Activated T-helper 2 cell treated with anti-CD3 and anti-CD28 coated beads, Interferon-gamma antibody, Interleukin-2, Interleukin-4, amounts not matched to agents 10 μg/mL and 5 μg/mL and 100 μg/mL, durations not matched to agents 14 hours and 24 hours and 36 hours (primary cell): ENCODE measurements at regions of chr4 and their contacts with region 1.

Region 1: DNA sequence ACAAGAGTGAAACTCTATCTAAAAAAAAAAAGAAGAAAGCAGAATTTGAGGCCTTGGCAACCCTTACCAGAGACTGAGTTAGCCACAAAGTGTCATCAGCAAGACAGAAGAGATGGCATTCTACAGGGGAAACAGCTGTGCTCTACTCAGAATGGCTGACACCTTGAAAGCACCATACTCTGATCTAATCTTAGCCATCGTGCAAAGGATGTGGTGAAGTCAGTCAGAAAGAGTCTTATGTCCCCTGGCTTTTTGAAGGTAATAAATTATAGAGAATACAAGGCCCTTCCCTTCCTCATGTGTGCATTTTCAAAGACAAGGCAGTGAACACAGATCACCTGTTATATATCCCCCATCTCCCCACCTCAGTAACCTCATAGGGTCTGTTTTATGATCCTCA is 13.2 kb downstream of the CLNK start:
- DNase-seq: peak; percentile 59
- H3K4me3 Mint-ChIP-seq: peak overlapping the region; percentile 1
- H3K27ac Mint-ChIP-seq: peak overlapping the region; percentile 77
- H3K4me1 Mint-ChIP-seq: peaks cover 47% of the 10 kb centered on the region
- H3K27me3 Mint-ChIP-seq: no peaks in the 10 kb centered on the region

Region 2: GRCh38 chr4:10517671-10518070 is 153.7 kb before region 1 on chr4:
- intact Hi-C with region 1: no loop called
- DNase-seq: no peak
- H3K4me3 Mint-ChIP-seq: no peak overlapping the region
- H3K27ac Mint-ChIP-seq: no peak overlapping the region
- H3K4me1 Mint-ChIP-seq: no peaks in the 10 kb centered on the region
- H3K27me3 Mint-ChIP-seq: no peaks in the 10 kb centered on the region

Region 3: DNA sequence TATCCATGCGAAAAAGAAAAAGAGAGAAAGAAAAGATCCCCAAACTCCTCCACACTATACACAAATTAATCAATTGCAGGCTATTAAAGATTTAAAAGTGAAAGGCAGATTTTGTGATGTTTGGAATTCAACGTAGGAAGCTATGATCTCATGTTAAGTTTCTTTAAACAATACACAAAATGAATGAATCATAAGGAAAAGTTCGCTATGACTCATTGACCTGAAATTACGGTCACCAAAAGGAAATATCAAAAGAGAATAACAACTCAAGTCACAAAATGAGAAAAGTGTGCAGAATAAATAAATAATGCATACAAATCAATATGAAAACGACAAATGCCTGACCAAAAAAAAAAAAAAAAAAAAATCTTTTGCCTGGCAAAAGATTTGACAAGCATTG is 15.4 kb before region 1 on chr4:
- intact Hi-C with region 1: loop called (anchors 1 kb)
- DNase-seq: no peak
- H3K4me3 Mint-ChIP-seq: peak overlapping the region; percentile 55
- H3K27ac Mint-ChIP-seq: peak overlapping the region; percentile 90
- H3K4me1 Mint-ChIP-seq: peaks cover 42% of the 10 kb centered on the region
- H3K27me3 Mint-ChIP-seq: no peaks in the 10 kb centered on the region

Region 4: DNA sequence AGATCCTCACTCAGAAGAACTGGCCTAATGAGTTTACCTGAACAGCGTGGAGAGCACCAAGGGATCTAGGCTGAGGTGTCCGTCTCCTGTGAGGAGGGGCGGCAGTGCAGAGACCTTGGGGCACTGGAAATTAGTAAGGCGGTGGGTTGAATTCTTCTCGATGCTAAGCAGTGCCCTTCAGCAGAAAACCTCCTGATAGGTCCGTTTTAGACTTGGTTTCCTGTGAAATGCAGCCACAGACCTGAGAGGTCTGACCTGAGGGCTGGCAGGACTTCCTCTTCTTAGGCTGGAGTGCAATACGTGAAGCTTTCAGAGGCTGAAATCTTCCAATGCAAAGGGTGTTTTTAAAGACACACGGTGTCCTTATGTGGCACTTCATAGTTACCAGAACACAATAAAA is 13.3 kb after region 1 on chr4 and contains the start of gene CLNK:
- intact Hi-C with region 1: no loop called
- DNase-seq: no peak
- H3K4me3 Mint-ChIP-seq: no peak within 1 kb of the TSS
- H3K27ac Mint-ChIP-seq: no peak within 1 kb of the TSS
- H3K4me1 Mint-ChIP-seq: peaks cover 18% of the 10 kb centered on the region
- H3K27me3 Mint-ChIP-seq: no peaks in the 10 kb centered on the region
- total RNA-seq, gene CLNK: 0.89 and 1.3 TPM in 2 replicates

Region 5: DNA sequence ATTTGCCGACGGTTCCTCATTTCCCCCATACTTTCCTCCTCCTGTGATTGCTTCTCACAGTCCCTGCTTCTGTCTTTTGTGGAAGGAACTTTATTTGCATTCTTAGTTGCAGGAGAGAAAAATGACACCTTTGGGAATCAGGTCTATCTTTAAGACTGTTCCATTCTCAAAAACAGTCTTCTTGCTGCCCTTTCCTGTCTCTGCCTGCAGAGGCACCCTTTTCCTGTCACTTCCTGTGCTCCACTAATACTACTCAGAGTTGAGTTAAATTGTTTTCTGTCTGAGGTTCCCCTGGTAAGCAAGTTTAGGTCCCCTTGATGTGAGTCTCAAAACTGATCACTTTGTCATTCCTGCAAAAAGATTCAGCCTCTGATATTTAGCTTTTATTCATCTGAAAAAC is 222.0 kb after region 1 on chr4:
- intact Hi-C with region 1: loop called (anchors 10 kb)
- DNase-seq: no peak
- H3K4me3 Mint-ChIP-seq: no peak overlapping the region
- H3K27ac Mint-ChIP-seq: no peak overlapping the region
- H3K4me1 Mint-ChIP-seq: peaks cover 22% of the 10 kb centered on the region
- H3K27me3 Mint-ChIP-seq: peaks cover 4% of the 10 kb centered on the region

Region 6: GRCh38 chr4:10959586-10959985 is 288.2 kb after region 1 on chr4:
- intact Hi-C with region 1: loop called (anchors 10 kb)
- DNase-seq: no peak
- H3K4me3 Mint-ChIP-seq: no peak overlapping the region
- H3K27ac Mint-ChIP-seq: no peak overlapping the region
- H3K4me1 Mint-ChIP-seq: peaks cover 8% of the 10 kb centered on the region
- H3K27me3 Mint-ChIP-seq: peaks cover 13% of the 10 kb centered on the region